Right ventricle myocardium superior (tissue), 1 donor: ENCODE measurements at regions of chr17 and their contacts with region 1.

Region 1: DNA sequence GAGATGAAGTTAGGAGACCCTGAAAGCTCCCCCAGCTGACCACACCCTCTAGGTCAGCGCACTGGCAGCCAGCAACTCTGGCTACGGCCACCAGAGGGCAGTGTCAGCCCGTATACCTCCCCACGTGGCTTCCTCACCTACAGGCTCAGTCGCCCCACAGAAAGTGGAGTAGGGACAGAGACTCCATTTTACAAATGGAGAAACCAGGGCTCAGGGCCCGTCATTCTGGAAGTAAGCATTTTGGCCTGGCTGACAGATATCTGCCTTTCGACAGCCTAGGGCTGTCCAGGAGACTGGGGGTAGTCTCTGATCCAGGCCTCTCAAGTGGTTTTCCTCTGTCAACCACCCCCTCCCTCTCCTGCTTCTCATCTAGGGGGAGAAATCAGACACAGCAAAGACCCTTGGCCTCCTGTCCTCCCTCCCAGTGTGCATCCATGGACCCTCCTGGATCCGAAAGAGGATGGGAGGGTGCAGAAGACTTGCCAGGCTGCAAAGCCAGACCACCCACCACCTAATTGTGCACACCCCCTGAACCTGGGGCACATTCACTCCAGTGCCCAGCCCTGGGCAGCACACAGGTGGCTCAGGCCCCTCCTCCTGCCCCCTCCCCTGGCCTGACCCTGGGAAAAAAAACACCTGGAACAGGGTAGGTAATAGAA is 3.8 kb upstream of the HAP1 start:
- DNase-seq: peak; percentile 91
- ATAC-seq: peak; percentile 92

Region 2: GRCh38 chr17:41635121-41636097 is 102.8 kb before region 1 on chr17:
- intact Hi-C with region 1: no loop called
- DNase-seq: peak; percentile 62
- ATAC-seq: peak; percentile 80

Region 3: GRCh38 chr17:41801374-41802271 is 63.4 kb after region 1 on chr17:
- intact Hi-C with region 1: loop called (anchors 1 kb)
- DNase-seq: peak; percentile 91
- ATAC-seq: peak; percentile 92

Region 4: DNA sequence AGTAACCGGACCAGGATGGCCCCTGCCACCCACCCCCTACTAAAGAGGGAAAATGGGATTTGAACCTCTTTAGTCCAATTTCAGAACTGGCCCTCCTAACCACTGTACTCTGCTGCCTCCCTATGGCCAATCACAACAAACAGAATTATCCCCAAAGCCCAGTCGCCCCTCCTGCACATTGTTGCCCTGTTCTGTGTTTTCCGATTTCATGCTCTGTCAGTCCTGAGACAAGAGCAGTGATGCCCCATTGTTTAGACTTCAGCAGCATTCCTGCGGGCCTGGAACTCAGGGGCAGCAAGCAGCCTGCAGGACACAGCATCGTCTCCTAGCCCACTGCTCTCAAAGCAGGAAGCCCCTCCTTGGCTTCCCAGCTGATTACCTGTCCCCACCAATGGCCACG is 147.5 kb after region 1 on chr17:
- intact Hi-C with region 1: loop called (anchors 10 kb)
- DNase-seq: no peak
- ATAC-seq: no peak